Activated T-helper 1 cell treated with anti-CD3 and anti-CD28 coated beads, Interleukin-12 subunit alpha, Interleukin-12 subunit beta, Interleukin-2, Interleukin-4 antibody, amounts not matched to agents 30 ng/mL and 10 ng/mL and 1 ng/mL, durations not matched to agents 14 hours and 24 hours and 36 hours (primary cell): ENCODE measurements at regions of chr20 and their contacts with region 1.

Region 1: GRCh38 chr20:2752567-2753460 is 47.6 kb downstream of the CPXM1 start:
- DNase-seq: no peak
- H3K4me3 Mint-ChIP-seq: peak overlapping the region; percentile 79
- H3K27ac Mint-ChIP-seq: no peak overlapping the region
- H3K4me1 Mint-ChIP-seq: peaks cover 22% of the 10 kb centered on the region
- H3K27me3 Mint-ChIP-seq: peaks cover 43% of the 10 kb centered on the region

Region 2: GRCh38 chr20:2849529-2849928 is 96.7 kb after region 1 on chr20:
- intact Hi-C with region 1: loop called (anchors 2 kb)
- DNase-seq: no peak
- H3K4me3 Mint-ChIP-seq: no peak overlapping the region
- H3K27ac Mint-ChIP-seq: no peak overlapping the region
- H3K4me1 Mint-ChIP-seq: peaks cover 25% of the 10 kb centered on the region
- H3K27me3 Mint-ChIP-seq: no peaks in the 10 kb centered on the region

Region 3: GRCh38 chr20:2946988-2947961 is 194.5 kb after region 1 on chr20:
- intact Hi-C with region 1: no loop called
- DNase-seq: no peak
- H3K4me3 Mint-ChIP-seq: no peak overlapping the region
- H3K27ac Mint-ChIP-seq: no peak overlapping the region
- H3K4me1 Mint-ChIP-seq: peaks cover 5% of the 10 kb centered on the region
- H3K27me3 Mint-ChIP-seq: no peaks in the 10 kb centered on the region